CD14-positive monocyte (primary cell): ENCODE measurements at regions of chr1 and their contacts with region 1.

Region 1: GRCh38 chr1:84365225-84366221 is 32.8 kb upstream of the DNASE2B start:
- DNase-seq: peak; percentile 42 to 82 (median 58)
- H3K4me3 ChIP-seq: no peak overlapping the region
- H3K4me3 Mint-ChIP-seq: no peak overlapping the region
- H3K27ac ChIP-seq: no peak overlapping the region
- H3K27ac Mint-ChIP-seq: peak overlapping the region in 2 of 7 donors; percentile 22 to 48
- H3K4me1 ChIP-seq: no peaks in the 10 kb centered on the region
- H3K4me1 Mint-ChIP-seq: peaks cover 9% of the 10 kb centered on the region
- H3K27me3 ChIP-seq: no peaks in the 10 kb centered on the region
- H3K27me3 Mint-ChIP-seq: peaks cover 0 to 3% (median 1%) of the 10 kb centered on the region in 3 donors
- CTCF ChIP-seq: no peak

Region 2: GRCh38 chr1:84387480-84388163 is 22.1 kb after region 1 on chr1:
- intact Hi-C with region 1: loop called in 1 of 2 experiments (anchors 2 kb)
- DNase-seq: no peak
- H3K4me3 ChIP-seq: no peak overlapping the region
- H3K4me3 Mint-ChIP-seq: no peak overlapping the region
- H3K27ac ChIP-seq: no peak overlapping the region
- H3K27ac Mint-ChIP-seq: peak overlapping the region in 2 of 7 donors; percentile 0 to 41
- H3K4me1 ChIP-seq: peaks cover 20 to 25% of the 10 kb centered on the region in 2 donors
- H3K4me1 Mint-ChIP-seq: peaks cover 27% of the 10 kb centered on the region
- H3K27me3 ChIP-seq: no peaks in the 10 kb centered on the region
- H3K27me3 Mint-ChIP-seq: no peaks in the 10 kb centered on the region
- CTCF ChIP-seq: no peak